H1 (cell line): ENCODE measurements at regions of chr3 and their contacts with region 1.

Region 1: DNA sequence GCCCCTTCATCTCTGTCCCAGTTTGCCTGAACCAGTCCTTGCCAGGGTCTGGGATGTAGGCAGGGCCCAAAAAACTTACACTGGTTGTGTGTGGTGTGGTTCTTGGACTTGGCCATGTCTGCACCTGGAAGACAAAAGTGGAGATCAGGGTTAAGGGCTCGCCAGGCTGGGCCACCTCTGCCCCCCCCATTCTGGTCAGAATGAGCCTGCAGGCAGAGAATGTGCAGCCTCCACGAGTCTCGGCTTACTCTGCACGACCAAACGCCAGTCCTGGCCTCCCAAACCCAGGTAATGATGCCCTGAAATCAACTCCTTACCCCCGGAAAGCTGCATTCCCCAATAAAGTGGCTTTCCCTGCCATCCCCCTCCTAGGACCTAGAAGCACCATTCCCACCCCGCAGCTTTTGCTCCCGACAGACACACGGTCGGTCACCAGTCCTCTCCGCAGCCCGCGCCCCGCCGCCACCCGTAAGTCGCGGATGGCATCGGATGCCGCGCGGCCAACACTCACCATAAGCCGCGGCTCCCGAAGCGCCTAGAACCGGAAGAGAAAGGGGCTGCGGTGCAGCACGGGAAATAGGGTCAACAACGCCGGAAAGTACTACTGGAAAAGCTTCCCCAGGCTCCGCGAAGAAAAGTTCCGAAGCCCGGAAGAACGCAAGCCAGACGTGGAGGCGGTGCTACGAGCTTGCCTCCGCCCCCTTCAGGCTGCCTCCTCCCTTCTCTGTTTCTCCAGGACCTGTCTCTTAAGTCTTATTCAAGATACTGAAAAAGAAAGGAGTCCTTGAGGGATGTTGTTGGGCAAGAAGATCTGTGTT is at the start of gene RPL29:
- DNase-seq: peak; percentile 89 to 91
- H3K4me3 ChIP-seq: peak within 1 kb of the TSS; percentile 76 to 100 (median 88)
- H3K27ac ChIP-seq: peak within 1 kb of the TSS; percentile 91
- H3K4me1 ChIP-seq: peaks cover 4 to 20% (median 8%) of the 10 kb centered on the region in 4 experiments; a peak in 5 of 7 replicates
- H3K27me3 ChIP-seq: no peaks in the 10 kb centered on the region
- CTCF ChIP-seq: peak in 1 of 3 experiments; percentile 2; a peak in 1 of 4 replicates
- EP300 ChIP-seq: peak in 1 of 2 experiments; percentile 24; a peak in 1 of 3 replicates
- POLR2A ChIP-seq: peak in 1 of 2 experiments; percentile 96; a peak in 2 of 3 replicates
- RAD21 ChIP-seq: no peak
- total RNA-seq, gene RPL29: 1,467 and 1,476 TPM in 2 replicates

Region 2: GRCh38 chr3:51974963-51975851 is 20.3 kb before region 1 on chr3 and contains the start of gene ABHD14A:
- CTCF ChIA-PET with region 1: interaction called, 46 read pairs
- POLR2A ChIA-PET with region 1: interaction called, 923 read pairs
- DNase-seq: peak in 1 of 2 experiments; percentile 82
- H3K4me3 ChIP-seq: peak within 1 kb of the TSS; percentile 34 to 64 (median 48)
- H3K27ac ChIP-seq: no peak within 1 kb of the TSS
- H3K4me1 ChIP-seq: peaks cover 6 to 21% (median 15%) of the 10 kb centered on the region in 4 experiments
- H3K27me3 ChIP-seq: peaks cover 2 to 32% (median 24%) of the 10 kb centered on the region in 4 experiments; a peak in 6 of 7 replicates
- CTCF ChIP-seq: no peak
- EP300 ChIP-seq: no peak
- POLR2A ChIP-seq: peak in 1 of 2 experiments; percentile 49; a peak in 1 of 3 replicates
- RAD21 ChIP-seq: no peak
- total RNA-seq, gene ABHD14A: 1.8 and 4.6 TPM in 2 replicates

Region 3: GRCh38 chr3:52014613-52015012 is 19.1 kb after region 1 on chr3:
- CTCF ChIA-PET with region 1: interaction called, 171 read pairs
- POLR2A ChIA-PET with region 1: interaction called, 95 read pairs
- DNase-seq: peak in 1 of 2 experiments; percentile 71
- H3K4me3 ChIP-seq: no peak overlapping the region
- H3K27ac ChIP-seq: no peak overlapping the region
- H3K4me1 ChIP-seq: no peaks in the 10 kb centered on the region; a peak in 1 of 7 replicates
- H3K27me3 ChIP-seq: no peaks in the 10 kb centered on the region; a peak in 1 of 7 replicates
- CTCF ChIP-seq: peak in 2 of 3 experiments; percentile 70 to 86; a peak in 3 of 4 replicates
- EP300 ChIP-seq: no peak
- POLR2A ChIP-seq: no peak
- RAD21 ChIP-seq: peak; percentile 41 to 55

Region 4: DNA sequence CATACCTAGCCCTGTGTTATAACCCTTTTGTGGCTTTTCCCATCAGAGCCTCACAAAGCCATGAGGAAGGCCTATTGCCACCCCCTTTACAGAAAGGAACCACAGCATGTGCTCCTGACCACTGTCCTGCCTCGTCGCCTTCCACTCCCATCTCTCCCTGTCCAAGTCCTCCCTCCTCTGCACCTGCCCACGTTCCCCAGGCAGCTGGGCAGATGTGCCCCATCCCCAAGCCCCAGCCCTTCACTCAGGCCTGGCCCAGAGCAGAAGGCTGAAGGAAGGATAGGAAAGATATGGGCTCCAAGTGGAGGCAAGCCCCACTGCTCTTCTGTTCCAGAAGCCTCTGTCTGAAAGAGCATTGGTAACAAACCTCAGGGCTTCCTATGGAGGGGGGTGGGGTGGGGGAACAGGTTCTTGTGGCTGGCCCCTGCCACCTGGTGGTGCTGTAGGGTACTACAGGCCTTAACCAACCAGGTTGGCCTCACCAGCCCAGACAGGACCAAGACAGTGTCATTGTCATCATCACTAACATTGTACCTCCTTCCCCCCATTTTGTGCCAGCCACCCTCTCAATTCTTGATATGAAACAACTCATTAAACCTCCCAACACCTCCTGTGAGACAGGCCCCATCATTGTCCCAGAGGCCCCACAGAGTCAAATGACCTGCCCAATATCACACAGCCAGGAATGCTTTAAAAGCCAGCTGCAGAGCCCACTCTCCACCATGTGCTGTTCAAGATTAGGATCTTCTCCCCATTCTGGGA is 148.7 kb after region 1 on chr3:
- CTCF ChIA-PET with region 1: interaction called, 146 read pairs
- POLR2A ChIA-PET with region 1: interaction called, 30 read pairs
- DNase-seq: peak; percentile 54 to 92
- H3K4me3 ChIP-seq: no peak overlapping the region
- H3K27ac ChIP-seq: 0 out of 2 replicates have a peak overlapping the region, but pooled peaks have one; percentile 3
- H3K4me1 ChIP-seq: no peaks in the 10 kb centered on the region; a peak in 2 of 7 replicates
- H3K27me3 ChIP-seq: no peaks in the 10 kb centered on the region
- CTCF ChIP-seq: peak in 2 of 3 experiments; percentile 91 to 93; a peak in 3 of 4 replicates
- EP300 ChIP-seq: no peak
- POLR2A ChIP-seq: no peak
- RAD21 ChIP-seq: peak; percentile 82 to 86